HEK293 (cell line): ENCODE measurements at regions of chr16 and their contacts with region 1.

Region 1: GRCh38 chr16:3129137-3130131 is 5.4 kb upstream of the ZNF213 start:
- H3K4me3 ChIP-seq: peak overlapping the region; percentile 13
- H3K27ac ChIP-seq: peak overlapping the region; percentile 34; the same call in 1 of the 2 replicates
- H3K4me1 ChIP-seq: no peaks in the 10 kb centered on the region; the same call in 1 of the 2 replicates
- CTCF ChIP-seq: peak; percentile 87

Region 2: GRCh38 chr16:3029537-3030402 is 99.7 kb before region 1 on chr16:
- CTCF ChIA-PET with region 1: interaction called, 13 read pairs
- POLR2A ChIA-PET with region 1: interaction called, 13 read pairs
- H3K4me3 ChIP-seq: no peak overlapping the region
- H3K27ac ChIP-seq: no peak overlapping the region
- H3K4me1 ChIP-seq: peaks cover 5% of the 10 kb centered on the region
- CTCF ChIP-seq: no peak

Region 3: DNA sequence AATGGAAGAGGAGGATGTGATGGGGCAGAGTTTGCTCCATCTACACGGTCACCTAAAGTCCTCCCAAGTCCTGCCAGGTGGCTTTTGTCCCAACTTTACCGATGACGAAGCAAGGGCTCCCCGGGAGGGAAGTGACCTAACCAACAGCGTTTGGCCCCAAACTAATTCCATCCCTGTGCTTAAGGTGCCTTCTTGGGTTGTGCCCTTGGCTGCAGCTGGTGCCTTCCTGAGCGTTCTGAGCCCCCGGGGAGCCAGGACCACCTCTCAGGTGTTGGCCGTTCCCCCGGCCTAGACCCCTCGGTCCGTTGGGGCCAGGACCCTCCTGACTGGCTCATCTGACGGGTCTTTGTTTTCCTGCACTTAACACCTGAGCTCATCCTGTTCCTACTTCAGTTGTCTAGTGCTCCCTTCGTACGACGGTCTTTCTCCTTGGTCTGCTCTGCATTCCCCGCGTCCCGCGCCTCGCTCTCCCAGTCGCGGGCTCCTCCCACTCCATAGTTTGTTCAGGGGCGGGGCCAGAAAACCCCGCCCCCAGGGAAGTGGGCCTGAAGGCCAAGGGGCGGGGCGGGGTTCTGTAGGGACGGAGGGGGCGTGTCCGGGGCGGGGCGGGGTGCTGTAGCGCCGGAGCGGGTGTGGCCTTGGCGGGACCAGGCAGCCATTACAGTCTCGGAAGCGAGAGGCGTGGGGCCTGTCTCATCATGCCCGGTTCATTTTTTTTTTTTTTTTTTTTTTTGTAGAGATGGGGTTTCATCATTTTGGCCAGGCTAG is 29.5 kb before region 1 on chr16:
- CTCF ChIA-PET with region 1: interaction called, 38 read pairs
- POLR2A ChIA-PET with region 1: interaction called, 3 read pairs
- H3K4me3 ChIP-seq: no peak overlapping the region
- H3K27ac ChIP-seq: no peak overlapping the region
- H3K4me1 ChIP-seq: peaks cover 3% of the 10 kb centered on the region
- CTCF ChIP-seq: no peak

Region 4: GRCh38 chr16:3118204-3118806 is 11.1 kb before region 1 on chr16:
- CTCF ChIA-PET with region 1: interaction called, 14 read pairs
- POLR2A ChIA-PET with region 1: interaction called, 14 read pairs
- H3K4me3 ChIP-seq: no peak overlapping the region
- H3K27ac ChIP-seq: no peak overlapping the region
- H3K4me1 ChIP-seq: peaks cover 2% of the 10 kb centered on the region
- CTCF ChIP-seq: no peak

Region 5: DNA sequence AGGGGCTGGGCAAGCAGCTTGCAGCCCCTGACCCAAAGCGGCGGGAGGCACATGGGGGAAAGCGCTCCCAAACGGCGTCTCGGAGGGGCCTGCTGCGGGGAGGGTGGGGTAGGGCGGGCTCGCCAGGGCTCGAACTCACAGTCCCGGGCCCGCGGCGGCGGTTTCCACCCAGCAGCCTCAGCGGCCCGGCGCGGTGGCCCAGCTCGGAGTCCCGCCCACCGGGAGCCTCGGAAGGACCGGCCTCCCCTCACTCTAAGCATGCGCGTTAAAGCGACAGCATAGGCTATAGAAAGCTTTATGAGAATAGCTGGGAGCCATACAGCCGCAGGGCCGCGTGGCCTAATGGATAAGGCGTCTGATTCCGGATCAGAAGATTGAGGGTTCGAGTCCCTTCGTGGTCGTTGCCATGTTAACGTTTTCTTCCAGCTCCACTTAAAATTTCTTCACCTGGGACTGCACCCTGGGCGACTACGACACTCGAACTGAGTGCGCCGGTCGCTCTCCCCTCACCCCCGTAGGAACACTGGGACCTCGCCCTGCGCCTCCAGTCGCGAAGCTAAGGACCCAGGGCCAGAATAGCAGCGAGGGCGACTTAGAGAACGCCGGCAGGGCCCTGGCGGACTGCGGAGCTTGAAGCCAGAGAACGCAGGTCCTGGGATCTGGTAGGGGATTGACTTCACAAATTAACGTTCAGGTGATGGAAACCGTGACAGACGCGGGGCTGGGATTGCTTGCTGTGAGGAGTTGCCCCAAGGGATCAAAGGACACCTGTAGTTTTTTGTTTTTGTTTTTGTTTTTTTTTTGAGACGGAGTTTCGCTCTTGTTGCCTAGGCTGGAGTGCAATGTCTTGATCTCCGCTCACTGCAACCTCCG is 21.1 kb after region 1 on chr16:
- CTCF ChIA-PET with region 1: interaction called, 20 read pairs
- POLR2A ChIA-PET with region 1: interaction called, 38 read pairs
- H3K4me3 ChIP-seq: peak overlapping the region; percentile 59
- H3K27ac ChIP-seq: peak overlapping the region; percentile 88
- H3K4me1 ChIP-seq: no peaks in the 10 kb centered on the region
- CTCF ChIP-seq: 0 out of 2 replicates have a peak, but pooled peaks have one; percentile 16

Region 6: GRCh38 chr16:3165111-3165822 is 35.8 kb after region 1 on chr16:
- CTCF ChIA-PET with region 1: interaction called, 11 read pairs
- POLR2A ChIA-PET with region 1: no interaction called
- H3K4me3 ChIP-seq: no peak overlapping the region
- H3K27ac ChIP-seq: no peak overlapping the region
- H3K4me1 ChIP-seq: no peaks in the 10 kb centered on the region; the same call in 1 of the 2 replicates
- CTCF ChIP-seq: no peak